PC-3 (cell line): ENCODE measurements at regions of chr18 and their contacts with region 1.

Region 1: DNA sequence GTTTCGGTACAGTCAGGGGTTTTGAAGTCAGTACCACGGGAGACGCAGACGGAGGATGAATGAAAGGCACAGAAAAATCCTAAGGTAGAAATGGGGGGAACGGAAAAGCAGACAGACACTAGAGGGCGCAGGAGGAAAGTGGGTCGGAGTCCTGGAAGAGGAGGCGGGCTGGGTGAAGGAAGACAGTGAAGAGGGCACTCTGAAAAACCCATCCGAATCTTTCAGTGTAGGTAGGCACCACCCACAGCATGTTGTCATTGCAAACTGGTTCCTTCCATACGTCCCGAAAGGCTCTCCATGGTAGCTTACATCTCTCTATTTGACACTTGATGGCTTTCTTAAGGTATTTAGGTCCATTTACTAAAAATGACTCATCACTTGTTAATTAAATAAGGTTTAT is 18.5 kb upstream of the ZNF236 start:
- DNase-seq: peak; percentile 82
- ATAC-seq: peak; percentile 74
- H3K4me3 ChIP-seq: peak overlapping the region; percentile 55
- H3K27ac ChIP-seq: no peak overlapping the region
- H3K4me1 ChIP-seq: peaks cover 4% of the 10 kb centered on the region; the same call in 1 of the 2 replicates
- H3K27me3 ChIP-seq: no peaks in the 10 kb centered on the region
- CTCF ChIP-seq: peak; percentile 91

Region 2: GRCh38 chr18:76721207-76721996 is 82.4 kb before region 1 on chr18:
- CTCF ChIA-PET with region 1: no interaction called
- POLR2A ChIA-PET with region 1: no interaction called
- intact Hi-C with region 1: no loop called
- DNase-seq: no peak
- ATAC-seq: no peak
- H3K4me3 ChIP-seq: no peak overlapping the region
- H3K27ac ChIP-seq: no peak overlapping the region
- H3K4me1 ChIP-seq: no peaks in the 10 kb centered on the region
- H3K27me3 ChIP-seq: peaks cover 43% of the 10 kb centered on the region
- CTCF ChIP-seq: no peak

Region 3: DNA sequence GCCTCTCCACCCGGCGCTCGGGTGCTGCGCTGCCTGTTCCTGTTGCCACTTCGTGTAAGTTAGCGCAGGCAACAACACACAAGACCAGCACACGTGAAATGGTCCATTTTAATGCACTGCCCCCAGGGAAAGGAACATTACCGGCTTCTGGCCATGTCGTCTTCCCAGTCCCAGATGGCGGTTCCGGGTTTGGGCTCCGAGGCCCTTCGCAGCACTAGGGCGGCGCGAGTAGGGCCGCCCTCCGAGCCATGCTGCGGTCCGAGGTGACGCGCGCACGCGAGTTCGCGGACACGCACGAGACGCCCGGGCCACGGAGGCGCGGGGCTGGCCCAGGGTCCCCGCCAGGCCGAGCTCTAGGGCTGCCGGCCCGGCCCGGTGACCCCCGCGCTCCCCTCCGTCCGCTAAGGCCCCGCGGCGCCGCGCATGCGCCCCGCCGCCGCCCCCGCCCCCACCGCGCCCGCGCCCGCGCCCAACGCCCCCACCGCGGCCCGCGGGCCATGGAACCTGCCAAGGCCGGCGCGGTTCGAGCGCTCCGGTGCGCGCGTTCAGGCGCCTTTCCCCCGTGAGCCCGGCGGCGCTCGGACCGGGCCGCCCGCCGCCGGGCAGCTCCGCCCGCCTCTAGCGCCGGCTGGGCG is 18.2 kb after region 1 on chr18:
- CTCF ChIA-PET with region 1: interaction called, 5 read pairs
- POLR2A ChIA-PET with region 1: no interaction called
- intact Hi-C with region 1: loop called (anchors 2 kb)
- DNase-seq: peak; percentile 37
- ATAC-seq: peak; percentile 48
- H3K4me3 ChIP-seq: peak overlapping the region; percentile 99
- H3K27ac ChIP-seq: peak overlapping the region; percentile 83
- H3K4me1 ChIP-seq: peaks cover 20% of the 10 kb centered on the region
- H3K27me3 ChIP-seq: no peaks in the 10 kb centered on the region
- CTCF ChIP-seq: no peak

Region 4: DNA sequence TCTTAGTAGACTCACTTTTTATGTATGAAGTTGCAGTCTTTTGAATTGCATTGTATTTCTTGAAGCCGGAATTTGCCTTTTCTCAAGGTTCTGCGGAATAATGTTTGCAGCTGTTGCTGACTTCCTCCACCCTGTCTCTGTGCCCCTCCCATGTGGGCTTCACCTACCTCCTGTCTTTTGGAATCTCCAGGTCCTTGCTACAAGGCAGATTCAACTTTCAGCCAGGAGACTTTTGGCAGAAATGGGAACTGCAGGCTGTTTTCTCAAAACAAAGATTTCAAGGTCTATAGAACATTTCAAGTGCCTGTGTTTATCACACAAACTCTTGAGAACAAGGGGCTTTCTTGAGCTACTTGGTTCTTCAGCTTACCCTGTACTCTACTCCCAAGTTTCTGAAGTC is 44.1 kb after region 1 on chr18:
- CTCF ChIA-PET with region 1: interaction called, 6 read pairs
- POLR2A ChIA-PET with region 1: no interaction called
- intact Hi-C with region 1: loop called (anchors 2 kb)
- DNase-seq: peak; percentile 38
- ATAC-seq: peak; percentile 11; the same call in 1 of the 2 replicates
- H3K4me3 ChIP-seq: no peak overlapping the region
- H3K27ac ChIP-seq: no peak overlapping the region
- H3K4me1 ChIP-seq: peaks cover 24% of the 10 kb centered on the region
- H3K27me3 ChIP-seq: no peaks in the 10 kb centered on the region
- CTCF ChIP-seq: no peak; the same call in 1 of the 2 replicates

Region 5: DNA sequence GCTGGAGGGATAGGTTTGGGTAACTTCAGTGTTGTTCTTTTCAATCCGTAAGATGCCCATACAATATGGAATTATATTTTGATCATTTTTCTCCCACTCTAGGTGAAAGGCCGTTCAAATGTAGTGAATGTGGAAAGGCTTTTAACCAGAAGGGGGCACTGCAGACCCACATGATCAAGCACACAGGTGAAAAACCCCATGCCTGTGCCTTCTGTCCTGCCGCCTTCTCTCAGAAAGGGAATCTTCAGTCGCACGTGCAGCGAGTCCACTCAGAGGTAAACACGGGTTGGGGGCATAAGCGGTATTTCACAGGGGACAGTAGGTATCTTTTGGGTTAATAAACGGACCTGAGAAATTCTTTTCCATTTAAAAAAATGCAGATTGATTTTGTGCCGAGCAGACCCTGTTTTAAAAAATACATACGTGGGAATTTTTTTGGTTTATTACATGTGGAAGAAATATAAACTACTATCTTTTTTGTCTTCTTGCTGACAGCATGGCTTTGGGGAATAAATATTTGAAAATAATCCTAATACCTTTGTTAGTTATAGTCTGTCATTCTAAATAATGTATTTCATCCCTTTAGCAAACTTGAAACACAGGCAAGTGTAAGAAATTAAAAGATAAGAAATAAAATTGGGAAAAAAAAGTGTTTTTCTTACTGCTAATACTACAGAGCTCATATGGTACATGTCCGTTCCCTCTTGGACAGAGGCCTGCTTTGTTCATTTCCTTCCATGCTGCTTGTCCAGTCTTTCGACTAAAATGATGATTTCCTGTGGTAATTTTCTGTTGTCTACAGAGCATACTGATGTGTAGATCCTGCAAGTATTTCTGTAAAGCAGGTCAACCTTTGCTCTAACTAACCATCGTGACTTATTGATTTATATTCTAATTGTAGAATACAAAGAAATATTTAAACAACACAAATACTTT is 71.8 kb after region 1 on chr18:
- CTCF ChIA-PET with region 1: no interaction called
- POLR2A ChIA-PET with region 1: no interaction called
- intact Hi-C with region 1: loop called (anchors 2 kb)
- DNase-seq: peak; percentile 66
- ATAC-seq: peak; percentile 79
- H3K4me3 ChIP-seq: no peak overlapping the region
- H3K27ac ChIP-seq: no peak overlapping the region
- H3K4me1 ChIP-seq: no peaks in the 10 kb centered on the region
- H3K27me3 ChIP-seq: no peaks in the 10 kb centered on the region
- CTCF ChIP-seq: peak; percentile 82

Region 6: GRCh38 chr18:76922107-76922506 is 118.3 kb after region 1 on chr18:
- CTCF ChIA-PET with region 1: interaction called, 3 read pairs
- POLR2A ChIA-PET with region 1: no interaction called
- intact Hi-C with region 1: loop called (anchors 1 kb)
- DNase-seq: peak; percentile 38
- ATAC-seq: peak; percentile 92
- H3K4me3 ChIP-seq: no peak overlapping the region
- H3K27ac ChIP-seq: no peak overlapping the region
- H3K4me1 ChIP-seq: no peaks in the 10 kb centered on the region
- H3K27me3 ChIP-seq: no peaks in the 10 kb centered on the region
- CTCF ChIP-seq: peak; percentile 65

Region 7: DNA sequence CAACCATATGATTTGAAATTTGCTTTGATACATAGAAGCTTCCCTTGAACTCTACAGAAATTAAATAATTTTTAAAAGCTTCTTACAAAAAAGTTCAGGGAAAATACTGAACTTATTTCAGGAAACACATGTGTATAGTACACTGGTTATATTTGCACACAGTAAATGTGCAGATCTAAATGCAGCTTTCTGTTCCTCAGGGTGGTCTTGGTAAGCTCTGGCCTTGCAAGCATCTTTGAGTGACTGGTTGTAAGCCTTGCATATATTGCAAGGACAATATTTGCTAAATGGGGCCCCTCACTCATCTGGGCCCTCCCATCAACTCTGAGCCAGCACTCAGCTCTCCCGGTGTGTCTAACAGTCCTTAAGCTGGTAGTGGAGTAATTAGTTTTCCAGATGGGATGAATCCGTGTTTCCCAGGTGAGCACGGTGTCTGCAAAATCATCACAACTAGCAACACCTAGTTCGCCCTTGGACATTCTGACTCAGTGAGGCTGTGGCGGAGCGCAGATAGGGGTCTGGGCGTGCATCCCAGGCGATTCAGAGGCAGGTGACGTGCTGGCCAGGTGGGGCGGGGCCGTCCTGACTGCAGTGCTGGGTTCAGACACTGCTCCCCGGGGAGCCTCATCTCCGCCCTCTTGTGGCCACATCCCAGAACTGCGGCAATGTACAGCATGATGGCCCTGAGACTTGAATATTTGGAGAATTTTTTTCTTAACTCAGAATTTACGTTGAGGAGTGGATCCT is 179.2 kb after region 1 on chr18:
- CTCF ChIA-PET with region 1: interaction called, 4 read pairs
- POLR2A ChIA-PET with region 1: no interaction called
- intact Hi-C with region 1: loop called (anchors 1 kb)
- DNase-seq: peak; percentile 91
- ATAC-seq: peak; percentile 98
- H3K4me3 ChIP-seq: peak overlapping the region; percentile 47
- H3K27ac ChIP-seq: no peak overlapping the region
- H3K4me1 ChIP-seq: peaks cover 5% of the 10 kb centered on the region
- H3K27me3 ChIP-seq: no peaks in the 10 kb centered on the region
- CTCF ChIP-seq: peak; percentile 91

Region 8: DNA sequence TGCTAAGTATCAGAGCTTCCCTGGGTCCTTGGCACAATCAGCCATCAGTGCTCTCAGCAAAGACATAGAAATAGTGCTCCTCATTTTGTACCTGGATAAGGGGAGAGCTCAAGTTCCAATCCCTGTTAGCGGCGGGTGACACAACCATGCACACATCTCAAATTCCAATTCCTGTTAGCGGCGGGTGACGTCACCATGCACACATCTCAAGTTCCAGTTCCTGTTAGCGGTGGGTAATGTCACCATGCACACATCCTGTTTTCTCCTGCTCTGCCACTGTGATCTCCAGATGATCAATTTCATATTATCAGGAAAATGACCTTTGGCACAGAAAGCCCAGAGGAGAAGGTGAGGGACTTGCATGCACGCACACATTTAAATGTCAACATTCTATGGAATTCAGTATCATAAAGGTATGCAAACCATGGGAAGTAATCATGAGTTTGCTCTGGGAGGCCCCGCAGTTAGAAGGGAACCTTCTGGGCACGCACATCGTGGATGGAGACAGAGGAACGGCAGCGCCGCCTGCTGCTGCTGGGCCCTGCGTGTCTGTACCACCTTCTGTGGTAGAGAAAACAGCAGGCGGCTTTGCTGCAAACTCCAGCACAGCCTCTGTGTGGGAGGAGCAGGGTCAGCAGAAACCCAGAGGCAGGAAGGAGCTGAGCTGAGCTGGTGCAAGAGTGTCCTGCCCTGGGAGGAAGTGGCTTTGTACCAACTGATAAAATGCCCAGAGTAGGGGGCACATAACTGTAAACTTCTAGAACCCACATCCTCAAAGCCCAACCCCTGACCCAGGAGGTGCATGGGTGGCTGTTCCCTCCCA is 251.0 kb after region 1 on chr18:
- CTCF ChIA-PET with region 1: no interaction called
- POLR2A ChIA-PET with region 1: no interaction called
- intact Hi-C with region 1: loop called (anchors 5 kb)
- DNase-seq: peak; percentile 93
- ATAC-seq: peak; percentile 92
- H3K4me3 ChIP-seq: peak overlapping the region; percentile 54
- H3K27ac ChIP-seq: peak overlapping the region; percentile 98
- H3K4me1 ChIP-seq: peaks cover 32% of the 10 kb centered on the region
- H3K27me3 ChIP-seq: no peaks in the 10 kb centered on the region
- CTCF ChIP-seq: peak; percentile 85

Region 9: GRCh38 chr18:77114415-77115191 is 310.8 kb after region 1 on chr18:
- CTCF ChIA-PET with region 1: no interaction called
- POLR2A ChIA-PET with region 1: no interaction called
- intact Hi-C with region 1: no loop called
- DNase-seq: no peak
- ATAC-seq: no peak
- H3K4me3 ChIP-seq: no peak overlapping the region
- H3K27ac ChIP-seq: no peak overlapping the region
- H3K4me1 ChIP-seq: no peaks in the 10 kb centered on the region
- H3K27me3 ChIP-seq: no peaks in the 10 kb centered on the region
- CTCF ChIP-seq: no peak